MCF 10A (cell line): ENCODE measurements at regions of chr16 and their contacts with region 1.

Region 1: GRCh38 chr16:28943281-28943680 is 7.5 kb upstream of the NFATC2IP start:
- DNase-seq: no peak
- H3K4me3 Mint-ChIP-seq: no peak overlapping the region
- H3K27ac Mint-ChIP-seq: no peak overlapping the region
- H3K4me1 Mint-ChIP-seq: peaks cover 17% of the 10 kb centered on the region
- H3K27me3 Mint-ChIP-seq: no peaks in the 10 kb centered on the region
- CTCF ChIP-seq: no peak

Region 2: GRCh38 chr16:28823872-28824716 is 119.2 kb before region 1 on chr16:
- CTCF ChIA-PET with region 1: interaction called, 8 read pairs
- POLR2A ChIA-PET with region 1: interaction called, 10 read pairs
- intact Hi-C with region 1: loop called (anchors 2 kb)
- DNase-seq: peak; percentile 96
- H3K4me3 Mint-ChIP-seq: peak overlapping the region; percentile 91
- H3K27ac Mint-ChIP-seq: peak overlapping the region; percentile 96
- H3K4me1 Mint-ChIP-seq: peaks cover 28% of the 10 kb centered on the region
- H3K27me3 Mint-ChIP-seq: no peaks in the 10 kb centered on the region
- CTCF ChIP-seq: peak; percentile 18

Region 3: GRCh38 chr16:28863929-28864793 is 79.1 kb before region 1 on chr16:
- CTCF ChIA-PET with region 1: interaction called, 14 read pairs
- POLR2A ChIA-PET with region 1: interaction called, 20 read pairs
- intact Hi-C with region 1: loop called (anchors 5 kb)
- DNase-seq: no peak
- H3K4me3 Mint-ChIP-seq: peak overlapping the region; percentile 94
- H3K27ac Mint-ChIP-seq: peak overlapping the region; percentile 90
- H3K4me1 Mint-ChIP-seq: peaks cover 14% of the 10 kb centered on the region
- H3K27me3 Mint-ChIP-seq: no peaks in the 10 kb centered on the region
- CTCF ChIP-seq: no peak

Region 4: GRCh38 chr16:28879841-28880588 is 63.3 kb before region 1 on chr16:
- CTCF ChIA-PET with region 1: interaction called, 23 read pairs
- POLR2A ChIA-PET with region 1: no interaction called
- intact Hi-C with region 1: loop called (anchors 2 kb)
- DNase-seq: peak; percentile 82
- H3K4me3 Mint-ChIP-seq: peak overlapping the region; percentile 79
- H3K27ac Mint-ChIP-seq: no peak overlapping the region
- H3K4me1 Mint-ChIP-seq: no peaks in the 10 kb centered on the region
- H3K27me3 Mint-ChIP-seq: peaks cover 12% of the 10 kb centered on the region
- CTCF ChIP-seq: no peak

Region 5: DNA sequence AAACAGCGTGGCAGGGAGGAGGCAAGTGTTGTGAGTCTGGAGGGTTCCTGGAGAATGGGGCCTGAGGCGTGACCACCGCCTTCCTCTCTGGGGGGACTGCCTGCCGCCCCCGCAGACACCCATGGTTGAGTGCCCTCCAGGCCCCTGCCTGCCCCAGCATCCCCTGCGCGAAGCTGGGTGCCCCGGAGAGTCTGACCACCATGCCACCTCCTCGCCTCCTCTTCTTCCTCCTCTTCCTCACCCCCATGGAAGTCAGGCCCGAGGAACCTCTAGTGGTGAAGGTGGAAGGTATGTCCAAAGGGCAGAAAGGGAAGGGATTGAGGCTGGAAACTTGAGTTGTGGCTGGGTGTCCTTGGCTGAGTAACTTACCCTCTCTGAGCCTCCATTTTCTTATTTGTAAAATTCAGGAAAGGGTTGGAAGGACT is 11.5 kb before region 1 on chr16 and contains the start of gene CD19:
- CTCF ChIA-PET with region 1: interaction called, 22 read pairs
- POLR2A ChIA-PET with region 1: interaction called, 19 read pairs
- intact Hi-C with region 1: no loop called
- DNase-seq: no peak
- H3K4me3 Mint-ChIP-seq: no peak within 1 kb of the TSS
- H3K27ac Mint-ChIP-seq: no peak within 1 kb of the TSS
- H3K4me1 Mint-ChIP-seq: no peaks in the 10 kb centered on the region
- H3K27me3 Mint-ChIP-seq: no peaks in the 10 kb centered on the region
- CTCF ChIP-seq: no peak
- total RNA-seq, gene CD19: not detected in 2 replicates